ENCODE measurements at regions of chr2 and their contacts with region 1.

Region 1: GRCh38 chr2:25453199-25453905 is 111.6 kb upstream of the DNMT3A start:
- DNase-seq: peak; percentile 73
- H3K4me3 Mint-ChIP-seq: peak overlapping the region; percentile 6
- H3K27ac Mint-ChIP-seq: peak overlapping the region; percentile 90
- H3K4me1 Mint-ChIP-seq: peaks cover 29% of the 10 kb centered on the region
- H3K27me3 Mint-ChIP-seq: no peaks in the 10 kb centered on the region

Region 2: DNA sequence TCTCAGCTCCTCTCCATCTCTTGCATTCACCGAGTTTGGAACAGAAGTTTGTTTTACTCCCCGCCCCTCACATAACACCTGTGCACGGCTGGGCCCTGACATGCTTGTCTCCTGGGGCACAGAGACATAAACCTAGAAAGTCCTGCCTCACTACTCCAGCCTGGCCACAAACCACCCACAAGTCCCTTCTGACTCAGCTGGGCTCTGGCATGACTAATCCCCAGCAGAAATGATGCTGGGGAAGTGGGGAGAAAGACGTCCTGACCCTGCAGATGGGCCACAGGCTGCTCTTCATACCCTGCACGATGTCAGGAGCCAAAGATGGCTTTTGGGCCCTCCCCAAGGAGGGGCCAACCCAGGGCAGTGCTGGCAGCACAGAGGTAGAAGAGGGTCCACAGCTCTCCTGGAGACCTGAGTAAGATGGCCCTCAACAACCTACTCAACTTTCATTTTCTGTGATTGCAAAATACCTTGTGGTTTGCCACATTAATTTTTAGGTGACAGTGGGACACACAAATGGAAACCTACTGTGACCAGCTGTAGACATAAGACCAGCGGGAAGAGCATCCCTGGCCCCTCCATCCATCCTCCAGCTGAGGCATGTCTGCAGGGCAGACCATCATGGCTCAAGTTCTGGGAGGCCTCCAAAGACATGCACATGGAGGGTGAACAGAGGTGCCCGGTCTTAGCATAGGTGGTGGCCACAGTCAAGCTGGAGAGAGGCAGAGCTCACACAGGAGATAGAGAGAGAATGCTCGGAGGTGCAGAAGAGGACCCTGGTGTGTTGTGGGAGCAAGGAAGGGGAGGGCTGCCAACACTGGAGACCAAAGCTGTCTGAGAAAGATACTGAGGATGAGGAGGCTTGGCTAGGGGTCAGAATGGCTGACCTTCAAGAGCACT is 151.6 kb before region 1 on chr2:
- CTCF ChIA-PET with region 1: no interaction called
- intact Hi-C with region 1: loop called (anchors 1 kb)
- DNase-seq: peak; percentile 89
- H3K4me3 Mint-ChIP-seq: no peak overlapping the region
- H3K27ac Mint-ChIP-seq: peak overlapping the region; percentile 25
- H3K4me1 Mint-ChIP-seq: peaks cover 66% of the 10 kb centered on the region
- H3K27me3 Mint-ChIP-seq: no peaks in the 10 kb centered on the region

Region 3: GRCh38 chr2:25362049-25362433 is 91.3 kb before region 1 on chr2:
- CTCF ChIA-PET with region 1: interaction called, 13 read pairs
- intact Hi-C with region 1: loop called (anchors 1 kb)
- DNase-seq: peak; percentile 98
- H3K4me3 Mint-ChIP-seq: peak overlapping the region; percentile 82
- H3K27ac Mint-ChIP-seq: peak overlapping the region; percentile 94
- H3K4me1 Mint-ChIP-seq: peaks cover 11% of the 10 kb centered on the region
- H3K27me3 Mint-ChIP-seq: no peaks in the 10 kb centered on the region

Region 4: GRCh38 chr2:25473758-25474340 is 20.5 kb after region 1 on chr2:
- CTCF ChIA-PET with region 1: no interaction called
- intact Hi-C with region 1: no loop called
- DNase-seq: no peak
- H3K4me3 Mint-ChIP-seq: no peak overlapping the region
- H3K27ac Mint-ChIP-seq: no peak overlapping the region
- H3K4me1 Mint-ChIP-seq: no peaks in the 10 kb centered on the region
- H3K27me3 Mint-ChIP-seq: no peaks in the 10 kb centered on the region

Region 5: DNA sequence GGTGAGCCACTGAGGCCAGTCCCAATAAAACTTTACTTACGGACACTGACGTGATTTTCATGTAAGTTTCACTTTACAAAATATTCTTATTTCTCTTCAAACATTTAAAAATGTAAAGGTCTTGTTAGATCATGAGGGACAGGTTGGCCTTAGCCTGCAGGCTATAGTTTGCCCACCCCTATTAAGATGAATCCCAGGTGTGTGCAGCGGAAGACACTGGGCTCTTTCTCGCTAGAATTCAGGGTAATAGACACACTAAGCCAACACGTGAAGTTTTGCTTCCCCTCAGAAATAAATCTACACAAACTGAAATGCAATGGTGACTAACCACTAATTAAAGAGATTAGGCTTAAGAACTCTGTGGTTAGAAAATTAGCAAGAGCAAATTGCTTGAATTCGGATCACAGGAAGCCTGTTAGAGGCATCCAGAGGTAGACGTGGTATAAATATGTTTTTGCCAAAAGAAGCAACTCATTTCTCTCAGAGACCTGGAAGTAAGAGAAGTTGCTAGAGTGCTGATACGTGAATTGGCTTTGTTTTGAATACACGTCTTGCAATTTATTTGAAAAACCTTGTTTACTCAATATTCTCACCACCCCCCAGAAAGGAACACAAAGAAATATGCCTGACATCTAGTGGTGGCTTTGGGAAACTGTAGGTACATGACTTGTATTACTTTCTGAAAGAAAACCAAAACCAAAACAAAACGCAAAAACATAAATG is 68.5 kb after region 1 on chr2:
- CTCF ChIA-PET with region 1: no interaction called
- intact Hi-C with region 1: loop called (anchors 1 kb)
- DNase-seq: peak; percentile 53
- H3K4me3 Mint-ChIP-seq: peak overlapping the region; percentile 11
- H3K27ac Mint-ChIP-seq: peak overlapping the region; percentile 64
- H3K4me1 Mint-ChIP-seq: peaks cover 8% of the 10 kb centered on the region
- H3K27me3 Mint-ChIP-seq: no peaks in the 10 kb centered on the region

Region 6: GRCh38 chr2:25586726-25587144 is 133.4 kb after region 1 on chr2:
- CTCF ChIA-PET with region 1: no interaction called
- intact Hi-C with region 1: loop called (anchors 1 kb)
- DNase-seq: peak; percentile 60
- H3K4me3 Mint-ChIP-seq: no peak overlapping the region
- H3K27ac Mint-ChIP-seq: peak overlapping the region; percentile 54
- H3K4me1 Mint-ChIP-seq: peaks cover 17% of the 10 kb centered on the region
- H3K27me3 Mint-ChIP-seq: no peaks in the 10 kb centered on the region

Measured in activated naive CD4-positive, alpha-beta T cell treated with anti-CD3 and anti-CD28 coated beads for 36 hours (primary cell).